B cell (primary cell): ENCODE measurements at regions of chr9 and their contacts with region 1.

Region 1: GRCh38 chr9:105244003-105244733 is at the start of gene SLC44A1:
- DNase-seq: peak; percentile 92
- ATAC-seq: peak; percentile 84
- H3K4me3 ChIP-seq: peak within 1 kb of the TSS; percentile 38 to 85 (median 71)
- H3K4me3 Mint-ChIP-seq: peak within 1 kb of the TSS; percentile 95
- H3K27ac ChIP-seq: peak within 1 kb of the TSS; percentile 42 to 73
- H3K27ac Mint-ChIP-seq: peak within 1 kb of the TSS; percentile 89
- H3K4me1 ChIP-seq: peaks cover 11 to 15% of the 10 kb centered on the region in 2 donors
- H3K4me1 Mint-ChIP-seq: peaks cover 28% of the 10 kb centered on the region
- H3K27me3 ChIP-seq: no peaks in the 10 kb centered on the region
- H3K27me3 Mint-ChIP-seq: peaks cover 8% of the 10 kb centered on the region
- CTCF ChIP-seq: no peak
- total RNA-seq, gene SLC44A1: 16.2 and 17.7 TPM in 2 replicates

Region 2: DNA sequence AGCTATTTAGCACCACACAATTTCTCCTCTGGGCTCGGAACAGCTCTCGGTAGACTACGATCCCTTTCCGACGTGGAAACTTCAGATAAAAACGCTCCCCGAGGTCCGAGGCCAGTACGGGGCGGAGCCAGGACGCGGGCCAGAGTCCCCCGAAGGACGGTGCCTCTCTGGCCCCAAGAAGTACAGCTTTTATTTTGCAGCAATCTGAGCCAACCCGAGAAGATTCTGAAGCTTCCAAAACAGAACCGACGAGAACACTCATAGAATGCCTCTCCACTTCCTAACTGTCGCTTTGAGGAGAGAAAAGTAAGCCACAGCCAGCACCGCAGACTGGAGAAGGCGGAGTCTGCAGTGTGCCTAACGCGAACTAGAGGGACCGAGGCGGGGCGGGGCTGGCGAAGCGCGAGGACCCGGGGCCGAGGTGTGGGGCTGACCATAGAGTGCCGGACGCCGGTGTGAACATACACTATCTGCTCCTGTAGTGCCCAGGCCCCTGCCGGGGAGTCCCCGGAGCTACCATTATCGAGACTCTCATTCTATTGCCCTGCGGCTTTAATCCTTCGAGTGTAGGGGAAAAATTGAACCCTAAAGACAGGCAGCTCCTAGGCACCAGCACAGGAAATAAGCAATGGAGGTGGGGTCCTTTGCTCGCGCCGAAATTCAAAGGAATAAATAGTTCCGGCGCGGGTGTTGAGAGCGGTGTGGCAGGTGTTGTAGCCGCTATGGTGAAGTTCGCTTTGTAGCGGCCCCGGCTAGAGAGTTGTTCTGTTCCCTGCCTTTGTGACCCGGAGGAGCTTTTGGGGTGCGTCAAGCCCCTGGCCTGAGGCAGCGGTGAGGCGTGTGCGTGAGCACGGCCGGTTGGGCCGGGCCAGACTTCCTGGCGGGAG is 1150.3 kb before region 1 on chr9 and contains the start of gene SMC2:
- CTCF ChIA-PET with region 1: no interaction called
- POLR2A ChIA-PET with region 1: no interaction called
- intact Hi-C with region 1: loop called (anchors 2 kb)
- DNase-seq: peak; percentile 97
- ATAC-seq: peak; percentile 98
- H3K4me3 ChIP-seq: peak within 1 kb of the TSS; percentile 62 to 97 (median 80)
- H3K4me3 Mint-ChIP-seq: peak within 1 kb of the TSS; percentile 99
- H3K27ac ChIP-seq: peak within 1 kb of the TSS; percentile 97 to 98
- H3K27ac Mint-ChIP-seq: peak within 1 kb of the TSS; percentile 100
- H3K4me1 ChIP-seq: peaks cover 16 to 17% of the 10 kb centered on the region in 2 donors
- H3K4me1 Mint-ChIP-seq: peaks cover 36% of the 10 kb centered on the region
- H3K27me3 ChIP-seq: no peaks in the 10 kb centered on the region
- H3K27me3 Mint-ChIP-seq: no peaks in the 10 kb centered on the region
- CTCF ChIP-seq: no peak
- total RNA-seq, gene SMC2: 9.3 and 10.6 TPM in 2 replicates

Region 3: GRCh38 chr9:104774831-104775573 is 469.2 kb before region 1 on chr9:
- CTCF ChIA-PET with region 1: interaction called, 4 read pairs
- POLR2A ChIA-PET with region 1: no interaction called
- intact Hi-C with region 1: loop called (anchors 5 kb)
- DNase-seq: peak; percentile 86
- ATAC-seq: peak; percentile 90
- H3K4me3 ChIP-seq: peak overlapping the region in 4 of 5 experiments; percentile 3 to 48 (median 36)
- H3K4me3 Mint-ChIP-seq: no peak overlapping the region
- H3K27ac ChIP-seq: peak overlapping the region; percentile 77 to 81
- H3K27ac Mint-ChIP-seq: no peak overlapping the region
- H3K4me1 ChIP-seq: peaks cover 38 to 43% of the 10 kb centered on the region in 2 donors
- H3K4me1 Mint-ChIP-seq: peaks cover 34% of the 10 kb centered on the region
- H3K27me3 ChIP-seq: no peaks in the 10 kb centered on the region
- H3K27me3 Mint-ChIP-seq: no peaks in the 10 kb centered on the region
- CTCF ChIP-seq: no peak

Region 4: DNA sequence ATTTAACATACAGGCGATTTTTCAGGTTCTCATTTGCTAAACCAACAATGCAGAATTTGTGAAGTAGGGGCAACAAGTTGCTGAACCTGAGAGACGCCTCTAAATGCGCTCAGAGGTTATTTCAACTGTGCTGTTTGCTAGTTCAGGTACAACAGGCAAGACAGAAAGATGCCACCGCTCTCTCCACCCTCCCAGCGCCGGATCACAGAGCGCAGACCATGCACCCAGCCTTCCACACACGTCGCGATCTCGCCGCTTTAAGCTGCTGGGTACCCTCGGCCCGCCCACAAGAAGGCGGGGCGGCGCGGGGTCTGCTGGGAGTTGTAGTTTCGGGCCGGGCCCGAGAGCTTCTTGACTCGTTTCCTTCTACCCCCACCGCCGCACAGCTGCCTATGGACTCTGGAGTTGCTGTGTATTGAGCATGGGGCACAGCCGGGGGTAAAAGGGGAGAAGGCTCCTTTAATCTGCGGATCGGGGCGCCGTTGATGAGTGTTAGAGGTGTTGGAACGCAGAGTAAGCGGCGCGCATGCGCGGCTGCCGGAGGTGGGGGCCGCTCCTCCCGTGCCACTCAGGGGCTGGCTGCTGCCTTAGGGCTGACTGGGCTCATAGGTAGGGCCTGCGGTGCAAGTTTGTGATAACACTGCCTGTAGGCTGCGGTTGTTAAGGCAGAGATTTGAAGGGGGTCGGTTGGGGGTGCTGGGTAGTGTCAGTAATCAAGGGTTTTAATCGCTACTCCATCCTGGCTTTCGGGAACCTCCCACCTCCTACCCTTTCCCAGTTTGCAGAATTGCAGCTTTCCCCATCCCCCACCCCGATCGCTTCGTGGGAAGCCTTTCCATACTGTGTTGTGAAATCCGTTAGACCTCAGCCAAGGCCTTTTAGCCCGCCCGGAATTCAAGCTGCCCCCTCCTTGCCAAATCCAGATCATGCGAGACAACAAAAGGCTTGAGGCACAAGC is 275.9 kb before region 1 on chr9:
- CTCF ChIA-PET with region 1: no interaction called
- POLR2A ChIA-PET with region 1: no interaction called
- intact Hi-C with region 1: loop called (anchors 1 kb)
- DNase-seq: peak; percentile 92
- ATAC-seq: peak; percentile 99
- H3K4me3 ChIP-seq: peak overlapping the region; percentile 68 to 86 (median 78)
- H3K4me3 Mint-ChIP-seq: peak overlapping the region; percentile 91
- H3K27ac ChIP-seq: no peak overlapping the region
- H3K27ac Mint-ChIP-seq: peak overlapping the region; percentile 71
- H3K4me1 ChIP-seq: peaks cover 4 to 14% of the 10 kb centered on the region in 2 donors
- H3K4me1 Mint-ChIP-seq: peaks cover 10% of the 10 kb centered on the region
- H3K27me3 ChIP-seq: peaks cover 0 to 4% (median 2%) of the 10 kb centered on the region in 4 experiments
- H3K27me3 Mint-ChIP-seq: peaks cover 21% of the 10 kb centered on the region
- CTCF ChIP-seq: no peak

Region 5: GRCh38 chr9:105385381-105385985 is 141.3 kb after region 1 on chr9:
- CTCF ChIA-PET with region 1: interaction called, 6 read pairs
- POLR2A ChIA-PET with region 1: interaction called, 4 read pairs
- intact Hi-C with region 1: loop called (anchors 10 kb)
- DNase-seq: peak; percentile 71
- ATAC-seq: peak; percentile 99
- H3K4me3 ChIP-seq: peak overlapping the region; percentile 23 to 57 (median 44)
- H3K4me3 Mint-ChIP-seq: peak overlapping the region; percentile 85
- H3K27ac ChIP-seq: peak overlapping the region; percentile 35 to 66
- H3K27ac Mint-ChIP-seq: peak overlapping the region; percentile 88
- H3K4me1 ChIP-seq: peaks cover 8 to 13% of the 10 kb centered on the region in 2 donors
- H3K4me1 Mint-ChIP-seq: peaks cover 16% of the 10 kb centered on the region
- H3K27me3 ChIP-seq: no peaks in the 10 kb centered on the region
- H3K27me3 Mint-ChIP-seq: no peaks in the 10 kb centered on the region
- CTCF ChIP-seq: no peak

Region 6: GRCh38 chr9:105694190-105694847 is 450.2 kb after region 1 on chr9 and contains the start of gene TMEM38B:
- CTCF ChIA-PET with region 1: no interaction called
- POLR2A ChIA-PET with region 1: no interaction called
- intact Hi-C with region 1: loop called (anchors 2 kb)
- DNase-seq: peak; percentile 90
- ATAC-seq: peak; percentile 83
- H3K4me3 ChIP-seq: peak within 1 kb of the TSS; percentile 75 to 93 (median 82)
- H3K4me3 Mint-ChIP-seq: peak within 1 kb of the TSS; percentile 95
- H3K27ac ChIP-seq: peak within 1 kb of the TSS; percentile 58 to 77
- H3K27ac Mint-ChIP-seq: peak within 1 kb of the TSS; percentile 92
- H3K4me1 ChIP-seq: peaks cover 17 to 18% of the 10 kb centered on the region in 2 donors
- H3K4me1 Mint-ChIP-seq: peaks cover 19% of the 10 kb centered on the region
- H3K27me3 ChIP-seq: peaks cover 0 to 14% (median 11%) of the 10 kb centered on the region in 4 experiments
- H3K27me3 Mint-ChIP-seq: peaks cover 26% of the 10 kb centered on the region
- CTCF ChIP-seq: no peak
- total RNA-seq, gene TMEM38B: 29.6 and 35.2 TPM in 2 replicates